ENCODE measurements at regions of chr22 and their contacts with region 1.

Region 1: DNA sequence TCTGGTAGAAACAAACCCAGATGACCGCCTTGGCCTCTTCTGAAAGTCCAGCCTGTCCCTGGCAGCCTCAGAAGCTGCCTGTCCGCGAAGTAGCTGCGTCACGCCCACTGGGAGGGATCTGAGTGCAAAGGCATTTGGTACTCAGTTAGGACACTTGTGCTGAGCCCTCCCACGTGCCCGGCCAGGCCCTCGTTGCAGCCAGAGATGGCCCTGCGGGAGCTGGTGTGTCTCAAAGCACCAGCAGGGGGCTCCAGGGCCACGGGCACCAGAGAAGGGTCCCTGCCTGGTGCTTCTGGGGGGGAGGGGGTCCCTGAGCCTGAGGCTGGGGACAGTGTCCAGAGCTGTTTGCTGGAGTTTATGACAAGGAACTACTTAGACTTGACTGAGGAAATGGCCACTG is 5.8 kb downstream of the SELENOO start:
- DNase-seq: peak; percentile 89

Region 2: DNA sequence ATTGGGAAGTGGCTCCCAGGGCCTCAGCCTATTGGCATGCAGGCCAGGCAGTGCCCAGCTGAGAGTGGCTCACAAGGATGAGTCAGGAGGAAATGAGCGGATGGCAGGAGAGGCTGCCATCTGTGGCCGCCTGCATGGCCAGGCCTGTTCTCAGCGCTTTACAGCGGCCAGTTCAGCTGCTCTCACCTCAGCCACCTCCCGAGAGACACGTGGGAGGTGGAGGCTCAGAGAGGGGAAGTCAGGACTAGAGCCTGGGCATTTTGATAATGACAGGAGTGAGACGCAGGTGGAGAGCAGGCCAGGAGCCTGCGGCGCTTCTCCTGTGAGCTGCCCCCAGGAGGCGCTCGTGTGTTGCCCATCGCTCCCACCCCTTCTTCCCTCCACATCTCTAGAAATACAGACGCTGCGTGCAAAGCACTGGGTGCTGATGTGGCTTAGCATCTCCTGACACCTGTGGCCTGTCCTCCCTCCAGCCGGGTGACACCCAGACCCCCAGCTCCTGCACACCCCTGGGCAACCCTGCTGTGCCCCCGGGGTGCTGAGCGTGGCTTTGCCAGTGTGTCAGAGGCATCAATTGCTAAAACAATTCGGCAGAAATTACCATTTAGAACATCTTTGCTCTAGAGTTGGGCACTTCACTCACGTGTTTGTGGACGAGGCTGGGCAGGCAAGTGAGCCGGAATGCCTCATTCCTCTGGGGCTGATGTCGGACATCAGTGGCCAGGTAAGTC is 57.4 kb before region 1 on chr22:
- intact Hi-C with region 1: loop called (anchors 2 kb)
- DNase-seq: peak; percentile 85